ENCODE measurements at regions of chr6 and their contacts with region 1.

Region 1: DNA sequence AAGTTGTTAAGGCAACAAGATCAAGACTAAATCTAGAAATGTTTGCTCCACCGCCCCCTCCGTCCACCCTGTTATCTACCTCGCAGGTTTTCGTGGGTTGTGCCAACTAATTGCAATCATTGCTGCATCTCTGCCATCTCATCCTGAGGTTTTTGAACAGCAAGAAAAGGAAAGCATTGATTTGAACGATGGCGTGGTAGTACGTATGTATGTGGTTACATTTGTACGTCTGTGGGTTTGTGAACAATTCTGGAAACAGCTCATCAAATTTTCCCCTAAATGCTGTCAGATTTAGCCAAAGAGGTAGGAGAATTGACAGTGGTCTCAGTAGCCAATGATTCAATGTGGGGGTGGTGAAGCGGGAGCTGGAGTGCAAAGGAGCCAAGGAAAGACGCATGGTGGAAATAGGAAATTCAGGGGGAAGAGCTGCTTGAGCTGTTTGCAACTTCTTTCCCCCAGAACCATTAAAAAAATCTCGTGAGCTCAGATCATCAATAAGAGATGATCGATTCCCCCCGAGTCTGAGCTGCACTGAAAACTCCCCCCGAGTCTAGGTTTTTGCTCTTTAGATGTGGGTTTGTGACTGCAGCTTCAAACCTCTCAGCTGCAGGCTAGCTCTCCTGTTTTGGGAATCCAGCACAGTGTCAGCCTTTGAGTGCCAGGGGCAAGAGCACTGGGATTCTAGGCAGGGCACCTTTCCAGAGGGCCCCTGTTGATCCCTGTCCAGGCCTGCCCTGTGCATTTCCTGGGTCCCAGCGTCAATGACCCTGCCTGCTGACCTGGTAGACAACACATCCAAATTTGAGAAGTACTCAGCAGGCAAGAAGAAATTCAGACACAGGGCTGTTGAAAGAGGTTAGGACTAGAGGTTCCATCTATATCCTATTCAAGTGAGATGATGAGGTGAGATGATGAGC is 72.6 kb upstream of the LY86 start:
- DNase-seq: no peak
- H3K4me3 ChIP-seq: no peak overlapping the region
- H3K27ac ChIP-seq: no peak overlapping the region
- H3K4me1 ChIP-seq: no peaks in the 10 kb centered on the region
- H3K27me3 ChIP-seq: peaks cover 15% of the 10 kb centered on the region
- CTCF ChIP-seq: no peak

Region 2: GRCh38 chr6:7312616-7313504 is 796.9 kb after region 1 on chr6 and contains the start of gene SSR1:
- CTCF ChIA-PET with region 1: no interaction called
- POLR2A ChIA-PET with region 1: interaction called, 10 read pairs
- intact Hi-C with region 1: no loop called
- DNase-seq: peak; percentile 98
- H3K4me3 ChIP-seq: peak within 1 kb of the TSS; percentile 85
- H3K27ac ChIP-seq: peak within 1 kb of the TSS; percentile 85
- H3K4me1 ChIP-seq: no peaks in the 10 kb centered on the region
- H3K27me3 ChIP-seq: no peaks in the 10 kb centered on the region
- CTCF ChIP-seq: no peak
- total RNA-seq, gene SSR1: 152 and 161 TPM in 2 replicates